ENCODE measurements at regions of chr12 and their contacts with region 1.

Region 1: DNA sequence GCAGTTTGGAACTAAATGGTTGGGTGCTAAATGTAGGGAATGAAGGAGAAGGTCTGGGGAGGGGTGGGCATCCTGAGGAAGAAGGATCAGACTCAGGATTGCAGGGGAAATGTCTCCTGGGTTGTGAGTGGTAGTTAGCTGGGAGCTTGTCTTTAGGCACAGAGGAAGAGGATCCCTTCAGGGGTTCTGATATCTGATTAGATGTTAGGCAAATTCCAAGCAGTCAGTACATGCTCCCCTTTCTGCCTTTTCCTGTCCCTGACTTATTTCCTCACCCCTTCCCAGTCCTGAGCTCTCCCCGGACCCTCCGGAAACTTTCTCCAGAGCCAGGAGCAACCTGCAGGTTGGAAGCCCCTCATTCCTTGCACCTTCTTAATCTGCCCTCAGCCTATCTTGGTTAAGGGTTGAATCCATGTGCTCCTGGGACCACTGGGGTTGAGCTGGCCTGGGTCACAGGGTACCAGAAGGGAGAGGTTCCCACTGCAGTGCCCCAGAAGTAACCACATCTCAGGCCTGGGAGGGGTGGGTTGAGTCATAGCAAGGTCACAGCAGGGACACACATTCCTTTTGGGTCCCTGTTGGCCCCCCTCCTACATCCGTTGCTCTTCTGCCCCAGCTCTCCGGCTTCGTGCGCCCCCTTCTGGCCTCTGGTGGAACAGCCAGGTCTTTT is 1.6 kb downstream of the IGFBP6 start:
- DNase-seq: peak; percentile 83
- H3K4me3 ChIP-seq: no peak overlapping the region
- H3K27ac ChIP-seq: peak overlapping the region; percentile 50
- H3K4me1 ChIP-seq: peaks cover 27% of the 10 kb centered on the region
- H3K27me3 ChIP-seq: no peaks in the 10 kb centered on the region
- CTCF ChIP-seq: peak; percentile 94 to 95
- POLR2A ChIP-seq: peak; percentile 53

Region 2: DNA sequence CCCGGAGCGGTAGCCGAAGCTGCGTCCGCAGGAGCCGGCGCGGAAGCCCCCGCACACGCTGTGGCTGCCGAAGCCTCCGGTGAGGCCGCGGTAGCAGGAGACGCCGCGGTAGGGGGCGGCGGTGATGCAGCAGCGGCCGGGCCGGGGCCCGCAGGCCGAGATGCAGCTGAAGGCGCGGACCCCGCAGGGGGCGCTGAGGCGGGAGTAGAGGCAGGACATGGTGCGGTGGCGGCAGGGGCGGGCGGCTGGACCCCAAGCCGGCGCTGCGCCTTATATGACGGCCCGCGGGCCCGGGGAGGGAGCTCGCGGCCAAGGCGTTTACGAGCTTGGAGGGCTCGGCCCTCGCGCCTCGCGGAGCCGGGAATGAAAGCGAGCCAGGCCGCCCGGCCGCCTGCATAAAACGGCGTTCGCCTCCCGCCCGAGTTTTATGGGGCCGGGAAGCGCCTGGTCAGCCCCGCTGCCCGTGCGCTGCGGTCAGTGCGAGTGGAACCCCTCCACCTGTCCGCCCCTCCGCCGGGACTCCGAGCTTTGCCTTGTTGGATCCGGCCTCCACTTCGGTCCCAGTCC is 840.7 kb before region 1 on chr12:
- CTCF ChIA-PET with region 1: no interaction called
- POLR2A ChIA-PET with region 1: no interaction called
- dilution Hi-C with region 1: no loop called
- intact Hi-C with region 1: no loop called
- DNase-seq: peak; percentile 44
- H3K4me3 ChIP-seq: no peak overlapping the region
- H3K27ac ChIP-seq: no peak overlapping the region
- H3K4me1 ChIP-seq: peaks cover 2% of the 10 kb centered on the region
- H3K27me3 ChIP-seq: peaks cover 33 to 37% of the 10 kb centered on the region in 2 experiments
- CTCF ChIP-seq: no peak
- POLR2A ChIP-seq: no peak

Region 3: GRCh38 chr12:52903285-52903854 is 195.7 kb before region 1 on chr12:
- CTCF ChIA-PET with region 1: no interaction called
- POLR2A ChIA-PET with region 1: no interaction called
- dilution Hi-C with region 1: no loop called
- intact Hi-C with region 1: no loop called
- DNase-seq: peak; percentile 75
- H3K4me3 ChIP-seq: peak overlapping the region in 2 of 3 experiments; percentile 13 to 44
- H3K27ac ChIP-seq: peak overlapping the region; percentile 69
- H3K4me1 ChIP-seq: peaks cover 10% of the 10 kb centered on the region
- H3K27me3 ChIP-seq: no peaks in the 10 kb centered on the region
- CTCF ChIP-seq: no peak
- POLR2A ChIP-seq: no peak

Region 4: GRCh38 chr12:52992699-52993557 is 106.2 kb before region 1 on chr12:
- CTCF ChIA-PET with region 1: no interaction called
- POLR2A ChIA-PET with region 1: no interaction called
- dilution Hi-C with region 1: no loop called
- intact Hi-C with region 1: no loop called
- DNase-seq: no peak
- H3K4me3 ChIP-seq: no peak overlapping the region
- H3K27ac ChIP-seq: no peak overlapping the region
- H3K4me1 ChIP-seq: no peaks in the 10 kb centered on the region
- H3K27me3 ChIP-seq: peaks cover 0 to 2% of the 10 kb centered on the region in 2 experiments
- CTCF ChIP-seq: no peak
- POLR2A ChIP-seq: no peak

Region 5: GRCh38 chr12:53054112-53054833 is 44.8 kb before region 1 on chr12:
- CTCF ChIA-PET with region 1: interaction called, 24 read pairs
- POLR2A ChIA-PET with region 1: no interaction called
- dilution Hi-C with region 1: no loop called
- intact Hi-C with region 1: loop called (anchors 5 kb)
- DNase-seq: peak; percentile 90
- H3K4me3 ChIP-seq: peak overlapping the region in 2 of 3 experiments; percentile 16 to 37
- H3K27ac ChIP-seq: no peak overlapping the region
- H3K4me1 ChIP-seq: peaks cover 42% of the 10 kb centered on the region
- H3K27me3 ChIP-seq: no peaks in the 10 kb centered on the region
- CTCF ChIP-seq: no peak
- POLR2A ChIP-seq: peak; percentile 60

Region 6: GRCh38 chr12:53079226-53080117 is 19.6 kb before region 1 on chr12 and contains the start of gene SPRYD3:
- CTCF ChIA-PET with region 1: interaction called, 23 read pairs
- POLR2A ChIA-PET with region 1: interaction called, 4 read pairs
- dilution Hi-C with region 1: no loop called
- intact Hi-C with region 1: loop called (anchors 1 kb)
- DNase-seq: peak; percentile 98
- H3K4me3 ChIP-seq: peak within 1 kb of the TSS; percentile 68 to 87 (median 80)
- H3K27ac ChIP-seq: peak within 1 kb of the TSS; percentile 52
- H3K4me1 ChIP-seq: peaks cover 9% of the 10 kb centered on the region
- H3K27me3 ChIP-seq: no peaks in the 10 kb centered on the region
- CTCF ChIP-seq: no peak
- POLR2A ChIP-seq: peak; percentile 98
- total RNA-seq, gene SPRYD3: 31.7 and 39.2 TPM in 2 replicates

Region 7: DNA sequence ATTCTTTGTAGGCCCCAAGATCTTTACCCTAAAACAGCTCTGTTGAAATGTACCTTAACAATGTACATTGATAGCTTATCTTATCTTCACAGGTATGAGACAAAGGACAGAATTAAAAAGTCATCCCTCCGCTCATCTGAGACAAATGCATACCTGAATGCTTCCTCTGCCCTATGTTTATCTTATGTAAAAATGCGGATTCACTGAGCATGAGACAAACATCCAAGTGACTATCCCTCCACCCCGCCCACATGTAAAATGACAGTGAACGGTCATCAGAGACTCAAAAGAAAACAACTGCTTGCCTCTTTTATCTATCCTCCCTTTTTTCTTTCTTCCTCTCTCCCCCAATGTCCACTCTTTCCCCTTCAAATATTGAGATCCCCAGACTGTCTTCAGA is 44.2 kb after region 1 on chr12:
- CTCF ChIA-PET with region 1: interaction called, 4 read pairs
- POLR2A ChIA-PET with region 1: interaction called, 10 read pairs
- dilution Hi-C with region 1: no loop called
- intact Hi-C with region 1: no loop called
- DNase-seq: no peak
- H3K4me3 ChIP-seq: no peak overlapping the region
- H3K27ac ChIP-seq: no peak overlapping the region
- H3K4me1 ChIP-seq: no peaks in the 10 kb centered on the region
- H3K27me3 ChIP-seq: peaks cover 5 to 6% of the 10 kb centered on the region in 2 experiments
- CTCF ChIP-seq: no peak
- POLR2A ChIP-seq: no peak

Region 8: GRCh38 chr12:53190108-53190729 is 91.1 kb after region 1 on chr12:
- CTCF ChIA-PET with region 1: interaction called, 11 read pairs
- POLR2A ChIA-PET with region 1: no interaction called
- dilution Hi-C with region 1: no loop called
- intact Hi-C with region 1: no loop called
- DNase-seq: peak; percentile 49
- H3K4me3 ChIP-seq: no peak overlapping the region
- H3K27ac ChIP-seq: no peak overlapping the region
- H3K4me1 ChIP-seq: peaks cover 4% of the 10 kb centered on the region
- H3K27me3 ChIP-seq: no peaks in the 10 kb centered on the region
- CTCF ChIP-seq: peak; percentile 73 to 86
- POLR2A ChIP-seq: no peak